OCI-LY7 (cell line): ENCODE measurements at regions of chr3 and their contacts with region 1.

Region 1: DNA sequence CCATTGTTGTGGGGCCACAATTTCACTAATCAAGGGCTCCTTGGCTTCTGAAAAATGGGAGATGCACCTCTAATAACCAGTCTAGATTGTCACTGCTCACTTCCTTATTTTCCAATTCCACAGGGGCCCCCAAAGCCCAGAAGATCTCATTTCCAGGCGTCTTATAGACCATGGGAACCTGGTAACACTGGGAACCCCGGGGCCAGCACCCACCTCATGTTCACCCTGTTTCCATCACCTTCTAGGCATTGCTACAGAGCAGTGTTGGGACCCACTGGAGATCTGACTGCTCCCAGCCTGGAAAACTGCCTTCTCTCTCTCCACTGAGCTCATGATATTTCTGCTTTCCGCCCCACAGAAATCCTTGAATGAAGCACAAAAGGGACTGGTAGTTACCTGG is 61.5 kb downstream of the TFRC start:
- DNase-seq: no peak
- H3K4me3 ChIP-seq: no peak overlapping the region
- H3K27ac ChIP-seq: no peak overlapping the region
- H3K4me1 ChIP-seq: no peaks in the 10 kb centered on the region
- CTCF ChIP-seq: no peak

Region 2: DNA sequence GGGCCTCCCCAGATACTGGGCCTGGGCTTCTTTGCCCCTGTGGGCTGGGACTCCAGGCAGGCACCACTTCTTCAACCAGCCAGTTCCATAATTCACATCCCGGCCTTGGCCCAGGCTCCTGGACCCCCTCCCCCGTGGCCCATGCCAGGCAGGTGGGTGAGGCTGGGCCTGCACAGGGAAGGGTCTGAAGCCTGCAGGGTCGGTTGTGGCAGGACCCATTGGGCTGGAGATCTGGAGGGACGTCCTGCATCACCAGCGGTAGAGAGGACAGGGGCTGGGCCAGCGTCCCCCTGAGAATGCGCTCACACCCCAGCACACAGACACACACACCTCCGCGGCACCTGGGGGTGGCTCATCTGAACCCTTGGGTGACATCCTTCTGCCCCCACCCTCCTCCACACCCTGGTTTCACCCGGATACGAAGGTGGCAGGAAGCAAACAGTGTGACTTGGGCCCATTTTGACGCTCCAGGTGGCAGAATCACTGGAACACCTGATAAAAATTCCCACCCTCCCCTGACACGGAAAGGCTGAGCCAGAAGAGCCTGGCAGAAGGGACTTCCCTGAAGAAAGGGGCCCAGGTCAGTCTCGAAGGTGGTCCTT is 175.4 kb after region 1 on chr3:
- CTCF ChIA-PET with region 1: no interaction called
- POLR2A ChIA-PET with region 1: interaction called, 4 read pairs
- intact Hi-C with region 1: loop called (anchors 1 kb)
- DNase-seq: no peak
- H3K4me3 ChIP-seq: no peak overlapping the region
- H3K27ac ChIP-seq: no peak overlapping the region
- H3K4me1 ChIP-seq: no peaks in the 10 kb centered on the region
- CTCF ChIP-seq: no peak

Region 3: GRCh38 chr3:196518966-196519717 is 498.8 kb after region 1 on chr3:
- CTCF ChIA-PET with region 1: no interaction called
- POLR2A ChIA-PET with region 1: interaction called, 3 read pairs
- intact Hi-C with region 1: loop called (anchors 1 kb)
- DNase-seq: peak; percentile 83
- H3K4me3 ChIP-seq: no peak overlapping the region
- H3K27ac ChIP-seq: no peak overlapping the region
- H3K4me1 ChIP-seq: no peaks in the 10 kb centered on the region
- CTCF ChIP-seq: peak; percentile 91